ENCODE measurements at regions of chr15 and their contacts with region 1.

Region 1: GRCh38 chr15:22918056-22918455 is 62.1 kb downstream of the CYFIP1 start:
- DNase-seq: no peak
- ATAC-seq: no peak
- H3K4me3 ChIP-seq: no peak overlapping the region
- H3K27ac ChIP-seq: no peak overlapping the region
- H3K4me1 ChIP-seq: no peaks in the 10 kb centered on the region
- H3K27me3 ChIP-seq: no peaks in the 10 kb centered on the region
- CTCF ChIP-seq: no peak
- POLR2A ChIP-seq: no peak

Region 2: DNA sequence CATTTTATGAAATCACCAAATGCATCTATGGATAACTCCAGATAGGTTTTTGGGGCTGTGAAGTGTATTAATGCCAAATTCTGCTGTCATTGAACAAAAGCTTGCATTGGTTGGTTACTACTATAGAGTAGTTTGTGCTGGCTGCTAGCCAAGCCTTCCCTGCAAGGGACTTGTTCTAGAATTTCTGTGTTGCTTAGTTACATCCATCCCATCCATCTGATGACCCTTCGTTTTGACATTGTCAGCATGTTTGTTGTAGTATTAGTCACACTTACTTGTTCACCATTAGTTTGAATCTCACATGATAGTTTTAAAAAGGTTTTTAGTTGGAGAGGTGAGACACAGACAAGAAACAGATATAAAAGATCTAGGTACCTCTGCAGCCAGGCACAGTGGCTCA is 86.6 kb before region 1 on chr15:
- intact Hi-C with region 1: no loop called
- DNase-seq: no peak
- ATAC-seq: no peak
- H3K4me3 ChIP-seq: no peak overlapping the region
- H3K27ac ChIP-seq: no peak overlapping the region
- H3K4me1 ChIP-seq: no peaks in the 10 kb centered on the region
- H3K27me3 ChIP-seq: no peaks in the 10 kb centered on the region
- CTCF ChIP-seq: no peak
- POLR2A ChIP-seq: no peak

Region 3: DNA sequence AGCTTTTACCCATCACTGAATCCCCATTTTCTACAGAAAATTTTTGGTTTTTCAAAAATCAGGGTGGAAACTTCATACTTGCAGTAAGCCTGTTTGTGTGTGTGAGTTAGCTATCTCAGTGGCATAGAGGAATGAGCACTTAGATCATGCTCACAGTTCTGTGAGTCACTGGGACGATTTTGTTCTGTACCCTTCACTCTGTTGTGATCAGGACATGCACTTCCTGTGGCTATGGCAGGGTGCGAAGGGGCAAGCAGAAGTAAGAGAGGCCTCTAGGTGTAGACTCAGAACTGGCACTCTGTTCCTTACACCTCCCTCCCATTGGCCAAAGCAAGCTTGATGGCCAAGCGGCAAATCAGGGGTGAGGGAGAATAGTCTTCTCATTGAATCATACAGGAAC is 68.0 kb before region 1 on chr15:
- intact Hi-C with region 1: loop called in 1 of 10 experiments (anchors 10 kb)
- DNase-seq: no peak
- ATAC-seq: peak in 2 of 4 donors; percentile 34 to 44
- H3K4me3 ChIP-seq: no peak overlapping the region
- H3K27ac ChIP-seq: no peak overlapping the region
- H3K4me1 ChIP-seq: peaks cover 0 to 4% (median 0%) of the 10 kb centered on the region in 12 donors
- H3K27me3 ChIP-seq: no peaks in the 10 kb centered on the region
- CTCF ChIP-seq: no peak
- POLR2A ChIP-seq: no peak

Region 4: GRCh38 chr15:22866079-22866478 is 52.0 kb before region 1 on chr15:
- intact Hi-C with region 1: loop called in 1 of 10 experiments (anchors 5 kb)
- DNase-seq: no peak
- ATAC-seq: no peak
- H3K4me3 ChIP-seq: no peak overlapping the region
- H3K27ac ChIP-seq: no peak overlapping the region
- H3K4me1 ChIP-seq: peaks cover 0 to 9% (median 0%) of the 10 kb centered on the region in 12 donors
- H3K27me3 ChIP-seq: no peaks in the 10 kb centered on the region
- CTCF ChIP-seq: no peak
- POLR2A ChIP-seq: no peak

Region 5: DNA sequence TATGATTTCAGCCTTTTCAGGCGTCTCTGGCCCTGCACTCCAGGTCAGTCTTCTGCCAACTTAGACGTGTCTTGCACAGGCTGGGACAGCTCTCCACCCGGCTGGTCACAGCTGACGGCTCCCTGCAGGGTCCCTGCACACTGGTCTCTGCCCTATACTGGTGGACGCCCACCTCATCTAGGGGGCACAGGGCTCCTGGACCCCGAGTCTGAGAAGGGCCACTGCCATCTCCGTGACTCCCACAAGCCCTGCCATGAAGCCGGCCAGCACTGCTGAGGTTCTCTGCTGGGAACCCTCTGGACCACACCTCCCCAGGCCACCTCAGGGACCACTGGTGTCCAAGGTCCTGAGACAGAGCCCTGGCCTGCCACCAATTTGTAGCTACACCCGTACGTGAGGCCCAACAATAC is 21.6 kb after region 1 on chr15:
- intact Hi-C with region 1: loop called in 1 of 10 experiments (anchors 2 kb)
- DNase-seq: no peak
- ATAC-seq: peak; percentile 33 to 62 (median 46)
- H3K4me3 ChIP-seq: no peak overlapping the region
- H3K27ac ChIP-seq: no peak overlapping the region
- H3K4me1 ChIP-seq: peaks cover 0 to 11% (median 0%) of the 10 kb centered on the region in 12 donors
- H3K27me3 ChIP-seq: no peaks in the 10 kb centered on the region
- CTCF ChIP-seq: no peak
- POLR2A ChIP-seq: no peak

Region 6: GRCh38 chr15:23014394-23015000 is 96.4 kb after region 1 on chr15:
- intact Hi-C with region 1: loop called in 1 of 10 experiments (anchors 10 kb)
- DNase-seq: no peak
- ATAC-seq: peak in 1 of 4 donors; percentile 50
- H3K4me3 ChIP-seq: no peak overlapping the region
- H3K27ac ChIP-seq: no peak overlapping the region
- H3K4me1 ChIP-seq: no peaks in the 10 kb centered on the region
- H3K27me3 ChIP-seq: no peaks in the 10 kb centered on the region
- CTCF ChIP-seq: no peak
- POLR2A ChIP-seq: no peak

Measured in heart left ventricle (tissue), 16 donors.